CD4-positive, alpha-beta T cell (primary cell): ENCODE measurements at regions of chr3 and their contacts with region 1.

Region 1: DNA sequence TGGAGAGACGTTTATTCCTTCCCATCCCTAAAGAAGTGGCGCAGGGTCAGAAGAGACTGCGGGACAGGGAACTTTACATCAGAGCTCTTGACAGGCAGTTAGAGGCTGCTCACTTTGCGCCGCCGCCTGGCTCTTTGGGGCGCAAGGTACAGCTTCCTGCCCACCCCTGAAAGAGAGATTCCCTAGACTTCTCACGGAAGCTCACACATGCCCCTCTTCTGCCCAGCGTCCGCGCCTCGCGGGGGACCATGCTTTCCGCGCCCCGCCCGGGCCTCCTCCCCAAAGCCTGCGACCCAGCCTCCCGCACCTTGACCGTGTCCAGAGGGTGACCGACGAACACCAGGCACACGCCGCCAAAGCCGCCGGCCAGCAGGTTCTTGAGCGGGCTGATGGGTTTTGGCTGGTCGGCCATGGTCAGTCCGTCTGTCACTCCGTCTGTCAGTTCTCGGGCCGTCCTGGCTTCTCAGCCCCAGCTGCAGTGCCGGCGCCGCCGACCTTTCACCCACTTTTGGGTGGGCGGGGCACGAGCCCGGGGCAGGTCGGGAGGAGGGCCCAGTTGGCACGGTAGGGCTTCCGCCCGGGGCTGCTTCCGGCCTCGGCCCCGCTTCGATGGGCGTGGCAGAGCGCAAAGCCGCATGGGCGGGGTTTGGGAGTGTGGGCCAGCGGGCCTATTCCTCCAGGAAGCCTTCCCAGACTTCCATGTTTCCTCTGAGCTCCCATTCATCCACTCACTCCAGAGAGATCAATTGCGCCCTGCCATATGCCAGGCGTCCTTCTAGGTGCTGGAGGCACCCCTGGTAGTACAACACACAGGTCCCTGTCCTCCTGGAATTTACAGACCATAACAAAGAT is at the start of gene SLC25A20:
- DNase-seq: peak; percentile 75 to 93 (median 88)
- ATAC-seq: peak; percentile 97
- H3K4me3 ChIP-seq: peak within 1 kb of the TSS; percentile 92
- H3K4me3 Mint-ChIP-seq: peak within 1 kb of the TSS; percentile 95
- H3K27ac ChIP-seq: peak within 1 kb of the TSS; percentile 71 to 84
- H3K27ac Mint-ChIP-seq: peak within 1 kb of the TSS; percentile 78
- H3K4me1 ChIP-seq: peaks cover 47% of the 10 kb centered on the region
- H3K4me1 Mint-ChIP-seq: peaks cover 40% of the 10 kb centered on the region
- H3K27me3 ChIP-seq: no peaks in the 10 kb centered on the region
- H3K27me3 Mint-ChIP-seq: no peaks in the 10 kb centered on the region
- CTCF ChIP-seq: no peak
- total RNA-seq, gene SLC25A20: 0.41 to 0.78 TPM

Region 2: GRCh38 chr3:48088749-48089466 is 809.7 kb before region 1 on chr3:
- CTCF ChIA-PET with region 1: no interaction called
- POLR2A ChIA-PET with region 1: no interaction called
- intact Hi-C with region 1: loop called in 1 of 2 experiments (anchors 5 kb)
- DNase-seq: peak; percentile 83 to 97 (median 93)
- ATAC-seq: peak; percentile 90
- H3K4me3 ChIP-seq: peak overlapping the region; percentile 82
- H3K4me3 Mint-ChIP-seq: peak overlapping the region; percentile 97
- H3K27ac ChIP-seq: peak overlapping the region; percentile 80 to 81
- H3K27ac Mint-ChIP-seq: peak overlapping the region; percentile 95
- H3K4me1 ChIP-seq: peaks cover 19% of the 10 kb centered on the region
- H3K4me1 Mint-ChIP-seq: peaks cover 35% of the 10 kb centered on the region
- H3K27me3 ChIP-seq: no peaks in the 10 kb centered on the region
- H3K27me3 Mint-ChIP-seq: no peaks in the 10 kb centered on the region
- CTCF ChIP-seq: no peak

Region 3: GRCh38 chr3:48716982-48717746 is 181.4 kb before region 1 on chr3 and contains the start of gene IP6K2:
- CTCF ChIA-PET with region 1: no interaction called
- POLR2A ChIA-PET with region 1: interaction called, 12 read pairs
- intact Hi-C with region 1: loop called in 1 of 2 experiments (anchors 2 kb)
- DNase-seq: peak; percentile 97 to 99 (median 98)
- ATAC-seq: peak; percentile 99
- H3K4me3 ChIP-seq: peak within 1 kb of the TSS; percentile 89
- H3K4me3 Mint-ChIP-seq: peak within 1 kb of the TSS; percentile 96
- H3K27ac ChIP-seq: peak within 1 kb of the TSS; percentile 77 to 88
- H3K27ac Mint-ChIP-seq: peak within 1 kb of the TSS; percentile 88
- H3K4me1 ChIP-seq: peaks cover 38% of the 10 kb centered on the region
- H3K4me1 Mint-ChIP-seq: peaks cover 43% of the 10 kb centered on the region
- H3K27me3 ChIP-seq: no peaks in the 10 kb centered on the region
- H3K27me3 Mint-ChIP-seq: no peaks in the 10 kb centered on the region
- CTCF ChIP-seq: no peak
- total RNA-seq, gene IP6K2: 97.2 to 121 TPM

Region 4: GRCh38 chr3:48811524-48811923 is 87.1 kb before region 1 on chr3:
- CTCF ChIA-PET with region 1: no interaction called
- POLR2A ChIA-PET with region 1: interaction called, 11 read pairs
- intact Hi-C with region 1: loop called in 1 of 2 experiments (anchors 5 kb)
- DNase-seq: no peak
- ATAC-seq: no peak
- H3K4me3 ChIP-seq: no peak overlapping the region
- H3K4me3 Mint-ChIP-seq: peak overlapping the region; percentile 9
- H3K27ac ChIP-seq: no peak overlapping the region
- H3K27ac Mint-ChIP-seq: peak overlapping the region; percentile 65
- H3K4me1 ChIP-seq: peaks cover 32% of the 10 kb centered on the region
- H3K4me1 Mint-ChIP-seq: peaks cover 40% of the 10 kb centered on the region
- H3K27me3 ChIP-seq: no peaks in the 10 kb centered on the region
- H3K27me3 Mint-ChIP-seq: no peaks in the 10 kb centered on the region
- CTCF ChIP-seq: no peak

Region 5: DNA sequence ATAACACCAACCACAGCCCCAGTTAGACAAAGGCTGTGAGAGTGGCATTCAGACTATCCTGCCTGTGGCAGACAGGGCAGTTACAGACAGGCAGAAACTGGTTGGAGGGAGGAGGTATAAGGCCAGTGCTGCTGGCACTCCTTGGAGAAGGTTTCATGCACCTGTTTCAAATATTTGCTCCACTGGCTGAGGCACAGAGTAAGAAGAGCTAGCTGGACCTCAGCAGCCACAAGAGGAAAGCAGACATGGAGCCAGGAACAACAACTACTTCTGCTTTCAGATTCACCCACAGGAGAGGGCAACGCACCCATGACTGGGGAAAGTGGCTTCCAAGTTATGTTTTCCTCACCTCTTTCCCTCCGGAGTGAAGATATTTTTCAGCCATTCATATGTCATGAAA is 39.4 kb before region 1 on chr3:
- CTCF ChIA-PET with region 1: no interaction called
- POLR2A ChIA-PET with region 1: no interaction called
- intact Hi-C with region 1: no loop called
- DNase-seq: no peak
- ATAC-seq: no peak
- H3K4me3 ChIP-seq: no peak overlapping the region
- H3K4me3 Mint-ChIP-seq: no peak overlapping the region
- H3K27ac ChIP-seq: no peak overlapping the region
- H3K27ac Mint-ChIP-seq: no peak overlapping the region
- H3K4me1 ChIP-seq: no peaks in the 10 kb centered on the region
- H3K4me1 Mint-ChIP-seq: no peaks in the 10 kb centered on the region
- H3K27me3 ChIP-seq: no peaks in the 10 kb centered on the region
- H3K27me3 Mint-ChIP-seq: no peaks in the 10 kb centered on the region
- CTCF ChIP-seq: no peak

Region 6: DNA sequence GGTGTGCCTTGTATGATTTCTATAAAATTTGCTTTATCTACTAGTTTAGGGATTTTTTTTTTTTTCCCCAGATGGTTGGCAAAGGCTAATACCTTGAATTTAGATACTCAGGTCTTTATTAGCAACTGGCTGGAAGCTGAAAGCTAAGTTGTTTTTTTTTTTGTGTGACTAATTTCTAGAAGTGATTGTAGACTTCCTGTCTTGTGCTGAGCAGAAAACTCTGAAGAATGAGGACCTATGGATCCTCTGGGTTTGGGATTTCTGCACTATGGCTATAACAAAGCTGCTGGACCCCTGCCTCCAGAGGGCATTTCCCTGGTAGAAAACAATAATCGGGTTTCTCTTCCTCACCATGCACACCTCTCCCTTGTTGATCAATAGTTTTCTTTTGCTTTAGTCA is 30.1 kb after region 1 on chr3:
- CTCF ChIA-PET with region 1: no interaction called
- POLR2A ChIA-PET with region 1: interaction called, 3 read pairs
- intact Hi-C with region 1: loop called in 1 of 2 experiments (anchors 5 kb)
- DNase-seq: no peak
- ATAC-seq: no peak
- H3K4me3 ChIP-seq: no peak overlapping the region
- H3K4me3 Mint-ChIP-seq: peak overlapping the region; percentile 25
- H3K27ac ChIP-seq: no peak overlapping the region
- H3K27ac Mint-ChIP-seq: no peak overlapping the region
- H3K4me1 ChIP-seq: peaks cover 49% of the 10 kb centered on the region
- H3K4me1 Mint-ChIP-seq: peaks cover 63% of the 10 kb centered on the region
- H3K27me3 ChIP-seq: no peaks in the 10 kb centered on the region
- H3K27me3 Mint-ChIP-seq: no peaks in the 10 kb centered on the region
- CTCF ChIP-seq: no peak